ENCODE measurements at regions of chr22 and their contacts with region 1.

Region 1: DNA sequence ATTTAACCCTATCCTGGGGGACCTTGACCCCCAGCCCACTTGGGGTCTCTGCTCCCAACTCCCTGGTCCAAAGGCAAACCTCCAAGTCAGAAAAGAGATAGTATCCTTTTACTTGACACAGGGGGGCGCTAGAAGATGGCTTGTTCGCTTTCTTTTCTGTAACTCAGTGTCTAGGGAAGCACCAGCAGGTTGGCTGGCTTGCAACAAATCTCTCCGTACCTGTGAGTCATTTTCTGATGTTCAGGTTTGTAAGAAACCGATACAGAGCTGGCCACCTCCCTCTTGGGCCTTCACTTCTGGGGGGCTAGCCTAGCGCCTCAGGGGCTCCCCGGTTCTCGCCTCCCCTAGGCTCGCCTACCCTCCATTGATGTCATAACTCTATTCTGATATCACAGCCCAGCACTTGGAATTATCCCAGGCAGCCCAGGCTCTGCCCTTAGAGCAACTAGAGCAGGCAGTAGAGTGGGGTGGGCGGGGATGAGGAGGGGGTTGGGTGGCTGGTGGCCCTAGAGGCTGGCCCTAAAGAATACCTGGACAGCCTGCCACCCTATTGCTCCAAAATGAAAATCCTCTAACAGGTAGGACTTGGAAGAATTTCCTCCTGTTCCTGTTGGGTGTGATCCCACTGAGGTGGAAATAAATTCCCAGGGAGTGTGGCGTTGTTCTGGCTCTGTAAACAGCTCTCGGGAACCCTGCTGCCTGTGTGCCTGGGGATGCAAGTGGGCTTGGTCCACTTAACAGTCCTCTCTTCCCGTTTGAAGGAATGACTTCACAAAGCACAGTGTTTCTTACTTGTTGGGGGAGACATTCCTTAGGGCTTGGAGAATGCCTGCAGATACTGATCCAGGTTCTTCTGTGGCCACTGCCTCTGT is 69.4 kb downstream of the OSBP2 start:
- DNase-seq: peak in 32 of 42 donors; percentile 30 to 83 (median 59)

Region 2: DNA sequence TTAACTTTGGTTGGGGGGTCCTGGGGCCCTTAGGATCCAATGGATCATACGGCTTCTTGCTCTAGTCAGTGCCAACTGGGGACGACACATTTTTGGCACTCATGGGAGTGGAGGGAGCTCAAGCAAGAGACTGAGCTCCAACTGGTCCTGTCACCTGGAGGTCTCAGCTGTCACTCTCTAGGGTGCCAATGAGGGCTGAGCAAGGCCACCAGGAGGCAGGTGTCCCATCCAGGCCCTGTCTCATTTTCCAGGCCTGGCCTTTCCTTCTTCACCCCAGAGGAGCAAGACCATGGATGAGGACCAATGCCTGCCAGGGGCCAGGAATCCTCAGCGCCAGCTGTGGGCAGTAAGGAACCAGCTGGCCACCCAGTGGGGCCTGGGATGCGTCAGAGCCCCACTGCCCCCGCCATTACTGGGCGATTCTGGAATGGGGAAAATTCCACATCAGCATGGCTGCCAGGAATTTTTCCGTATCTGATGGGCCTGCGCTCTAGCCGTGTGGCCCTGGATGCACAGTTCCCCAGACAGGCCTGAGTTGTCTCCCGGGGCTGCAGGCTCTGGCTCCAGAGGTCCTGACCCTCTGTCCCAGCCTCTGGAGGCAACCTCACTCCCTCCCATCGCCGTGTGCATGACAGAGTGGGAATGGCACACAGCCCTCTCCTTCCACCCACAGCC is 188.9 kb before region 1 on chr22:
- intact Hi-C with region 1: no loop called
- DNase-seq: peak in 39 of 42 donors; percentile 25 to 89 (median 62)

Region 3: DNA sequence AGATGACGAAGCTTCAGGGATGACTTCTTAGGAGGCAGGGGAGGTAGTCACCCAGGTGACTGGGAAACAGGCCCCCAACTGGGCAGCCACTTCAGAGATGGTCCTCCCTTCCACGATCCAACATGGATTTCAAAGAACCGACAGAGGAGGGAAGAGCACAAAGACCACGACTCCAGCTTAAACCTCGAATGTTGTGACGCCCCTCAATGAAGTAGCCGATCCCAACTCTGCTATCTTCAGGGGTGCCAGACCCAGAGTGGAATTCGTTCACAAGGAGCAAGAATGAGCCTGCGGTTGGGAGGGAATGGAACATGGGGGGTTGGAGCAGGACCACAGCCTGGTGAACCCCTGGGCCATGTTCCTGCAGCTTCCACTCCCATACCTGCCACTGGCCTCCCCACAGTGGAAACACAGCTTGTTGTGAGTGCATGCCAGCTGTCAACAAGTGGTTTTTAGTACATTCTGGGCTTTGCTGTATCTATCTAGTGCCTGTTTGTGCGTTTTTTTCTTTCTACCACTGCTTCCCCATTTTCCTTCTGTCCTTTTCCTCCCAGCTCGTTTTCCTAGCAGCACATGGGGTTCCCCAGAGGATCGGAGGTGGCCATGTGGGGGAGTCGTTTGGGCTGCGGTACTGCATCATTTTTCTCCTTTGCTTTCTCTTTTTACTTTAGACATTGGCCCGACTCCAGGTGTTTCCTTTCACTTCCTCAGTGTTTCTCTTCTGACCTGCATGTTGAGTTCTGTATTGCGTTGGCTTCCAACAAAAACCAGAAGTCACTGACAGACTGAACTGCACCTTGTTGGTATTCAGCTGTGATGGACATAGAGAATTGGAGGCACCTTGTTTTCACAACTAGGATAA is 138.7 kb after region 1 on chr22:
- intact Hi-C with region 1: loop called (anchors 5 kb)
- DNase-seq: peak in 9 of 42 donors; percentile 4 to 40 (median 20)

Region 4: DNA sequence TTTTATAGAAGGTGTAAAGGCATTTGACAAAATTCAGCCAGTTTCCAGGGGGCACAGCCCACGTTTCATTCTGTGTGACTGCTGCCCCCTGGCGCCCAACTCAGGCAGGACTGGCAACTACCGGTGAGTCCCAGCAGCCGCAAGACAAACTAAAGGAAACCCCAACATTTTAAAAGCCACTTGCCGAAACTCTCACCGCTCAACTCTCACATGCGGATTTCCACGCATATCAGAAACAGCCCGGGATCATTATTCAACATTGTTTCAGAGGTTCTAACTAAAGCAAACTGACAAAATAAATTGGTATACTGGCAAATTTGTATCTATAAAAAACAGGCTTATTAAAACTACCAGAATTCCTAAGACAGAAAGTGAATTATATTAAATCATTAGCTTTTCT is 156.4 kb after region 1 on chr22:
- intact Hi-C with region 1: loop called (anchors 5 kb)
- DNase-seq: peak; percentile 73 to 95 (median 87)